T-cell (primary cell): ENCODE measurements at regions of chr10 and their contacts with region 1.

Region 1: DNA sequence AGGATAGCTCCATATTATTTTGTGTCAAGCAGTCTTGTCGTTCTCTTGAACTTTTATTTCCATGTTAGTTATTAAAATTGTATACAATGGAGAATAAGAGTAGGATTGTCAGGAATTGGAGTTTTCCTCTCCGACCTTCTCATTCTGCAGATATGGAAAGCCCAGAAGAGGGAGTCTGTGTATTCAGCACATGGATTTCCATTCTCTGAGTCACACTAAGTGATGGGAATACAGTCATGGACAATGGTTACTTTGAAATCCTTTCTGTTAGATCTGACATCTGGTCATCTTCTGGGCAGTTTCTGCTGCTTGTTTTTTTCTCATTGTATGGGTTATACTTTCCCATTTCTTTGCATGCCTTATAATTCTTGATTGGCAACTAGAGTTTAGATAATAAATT is 5.0 kb upstream of the TASOR2 start:
- DNase-seq: no peak
- ATAC-seq: no peak
- H3K4me3 ChIP-seq: no peak overlapping the region
- H3K4me3 Mint-ChIP-seq: no peak overlapping the region
- H3K27ac ChIP-seq: no peak overlapping the region
- H3K27ac Mint-ChIP-seq: no peak overlapping the region
- H3K4me1 ChIP-seq: no peaks in the 10 kb centered on the region
- H3K4me1 Mint-ChIP-seq: peaks cover 8 to 9% (median 9%) of the 10 kb centered on the region in 3 donors
- H3K27me3 ChIP-seq: peaks cover 0 to 15% of the 10 kb centered on the region in 2 experiments
- H3K27me3 Mint-ChIP-seq: peaks cover 14 to 29% of the 10 kb centered on the region in 2 donors

Region 2: GRCh38 chr10:5396556-5397300 is 282.9 kb before region 1 on chr10:
- CTCF ChIA-PET with region 1: interaction called in 1 of 2 experiments, 13 read pairs
- POLR2A ChIA-PET with region 1: no interaction called
- DNase-seq: no peak
- ATAC-seq: no peak
- H3K4me3 ChIP-seq: no peak overlapping the region
- H3K4me3 Mint-ChIP-seq: no peak overlapping the region
- H3K27ac ChIP-seq: no peak overlapping the region
- H3K27ac Mint-ChIP-seq: no peak overlapping the region
- H3K4me1 ChIP-seq: no peaks in the 10 kb centered on the region
- H3K4me1 Mint-ChIP-seq: no peaks in the 10 kb centered on the region
- H3K27me3 ChIP-seq: peaks cover 0 to 14% of the 10 kb centered on the region in 2 experiments
- H3K27me3 Mint-ChIP-seq: peaks cover 10 to 12% of the 10 kb centered on the region in 2 donors

Region 3: GRCh38 chr10:5423771-5424170 is 255.8 kb before region 1 on chr10:
- CTCF ChIA-PET with region 1: no interaction called
- POLR2A ChIA-PET with region 1: no interaction called
- DNase-seq: no peak
- ATAC-seq: no peak
- H3K4me3 ChIP-seq: no peak overlapping the region
- H3K4me3 Mint-ChIP-seq: no peak overlapping the region
- H3K27ac ChIP-seq: no peak overlapping the region
- H3K27ac Mint-ChIP-seq: no peak overlapping the region
- H3K4me1 ChIP-seq: no peaks in the 10 kb centered on the region
- H3K4me1 Mint-ChIP-seq: no peaks in the 10 kb centered on the region
- H3K27me3 ChIP-seq: no peaks in the 10 kb centered on the region
- H3K27me3 Mint-ChIP-seq: no peaks in the 10 kb centered on the region

Region 4: GRCh38 chr10:5692461-5693358 is 13.1 kb after region 1 on chr10:
- CTCF ChIA-PET with region 1: interaction called in 1 of 2 experiments, 3 read pairs
- POLR2A ChIA-PET with region 1: interaction called, 3 to 13 read pairs
- DNase-seq: peak; percentile 18 to 79 (median 65)
- ATAC-seq: peak; percentile 85 to 93 (median 90)
- H3K4me3 ChIP-seq: peak overlapping the region; percentile 48 to 82
- H3K4me3 Mint-ChIP-seq: peak overlapping the region; percentile 67 to 74 (median 73)
- H3K27ac ChIP-seq: no peak overlapping the region
- H3K27ac Mint-ChIP-seq: peak overlapping the region; percentile 2 to 82
- H3K4me1 ChIP-seq: peaks cover 19 to 37% of the 10 kb centered on the region in 2 experiments
- H3K4me1 Mint-ChIP-seq: peaks cover 78 to 85% (median 82%) of the 10 kb centered on the region in 3 donors
- H3K27me3 ChIP-seq: no peaks in the 10 kb centered on the region
- H3K27me3 Mint-ChIP-seq: no peaks in the 10 kb centered on the region

Region 5: GRCh38 chr10:5723692-5724091 is 44.1 kb after region 1 on chr10:
- CTCF ChIA-PET with region 1: no interaction called
- POLR2A ChIA-PET with region 1: no interaction called
- DNase-seq: no peak
- ATAC-seq: no peak
- H3K4me3 ChIP-seq: no peak overlapping the region
- H3K4me3 Mint-ChIP-seq: no peak overlapping the region
- H3K27ac ChIP-seq: no peak overlapping the region
- H3K27ac Mint-ChIP-seq: no peak overlapping the region
- H3K4me1 ChIP-seq: no peaks in the 10 kb centered on the region
- H3K4me1 Mint-ChIP-seq: peaks cover 9 to 11% (median 10%) of the 10 kb centered on the region in 3 donors
- H3K27me3 ChIP-seq: no peaks in the 10 kb centered on the region
- H3K27me3 Mint-ChIP-seq: no peaks in the 10 kb centered on the region